PC-3 (cell line): ENCODE measurements at regions of chr6 and their contacts with region 1.

Region 1: DNA sequence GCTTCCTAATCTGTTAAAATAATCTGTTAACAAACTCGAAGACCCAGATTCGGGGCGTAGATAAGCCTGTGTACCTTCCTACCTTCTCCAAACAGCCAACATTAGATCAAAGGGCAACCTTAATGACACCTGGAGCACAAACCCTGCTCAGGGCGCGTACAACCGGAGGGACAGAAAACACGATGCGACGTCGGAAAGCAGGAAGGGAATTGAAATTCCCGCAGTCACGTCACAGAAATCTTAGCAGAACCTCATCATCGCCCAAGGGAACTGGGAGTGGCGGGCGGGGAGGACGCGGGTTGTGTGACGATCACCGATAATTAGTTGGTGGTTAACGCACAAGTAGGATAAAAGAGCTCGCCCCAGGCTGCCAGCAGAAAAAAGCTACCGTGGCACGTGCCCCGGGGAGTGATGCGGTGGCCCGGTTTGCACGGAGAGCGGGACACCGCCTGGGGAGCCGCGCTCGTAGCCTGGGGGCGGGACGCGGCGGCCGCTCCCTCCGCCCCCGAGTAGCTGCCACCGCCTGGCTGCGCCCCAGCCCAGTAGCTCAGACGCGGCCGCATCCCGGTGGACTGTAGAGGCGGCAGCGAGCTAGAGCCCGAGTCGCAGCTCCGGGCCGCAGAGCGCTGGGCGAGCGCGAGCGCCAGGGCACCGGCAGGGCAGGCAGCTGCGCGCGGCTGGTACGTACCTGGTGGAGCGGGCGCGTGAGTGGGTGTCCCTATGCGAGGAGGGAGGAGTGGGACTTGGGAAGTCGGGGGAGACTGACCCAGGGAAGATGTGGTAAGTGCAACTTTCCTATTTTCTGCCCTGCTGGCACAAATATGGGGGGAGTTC is at the start of gene PKIB:
- DNase-seq: peak; percentile 82
- ATAC-seq: peak; percentile 93
- H3K4me3 ChIP-seq: peak within 1 kb of the TSS; percentile 94
- H3K27ac ChIP-seq: peak within 1 kb of the TSS; percentile 49
- H3K4me1 ChIP-seq: peaks cover 4% of the 10 kb centered on the region
- H3K27me3 ChIP-seq: no peaks in the 10 kb centered on the region
- CTCF ChIP-seq: peak; percentile 28; the same call in 1 of the 2 replicates
- total RNA-seq, gene PKIB: 22.4 and 28.0 TPM in 2 replicates

Region 2: DNA sequence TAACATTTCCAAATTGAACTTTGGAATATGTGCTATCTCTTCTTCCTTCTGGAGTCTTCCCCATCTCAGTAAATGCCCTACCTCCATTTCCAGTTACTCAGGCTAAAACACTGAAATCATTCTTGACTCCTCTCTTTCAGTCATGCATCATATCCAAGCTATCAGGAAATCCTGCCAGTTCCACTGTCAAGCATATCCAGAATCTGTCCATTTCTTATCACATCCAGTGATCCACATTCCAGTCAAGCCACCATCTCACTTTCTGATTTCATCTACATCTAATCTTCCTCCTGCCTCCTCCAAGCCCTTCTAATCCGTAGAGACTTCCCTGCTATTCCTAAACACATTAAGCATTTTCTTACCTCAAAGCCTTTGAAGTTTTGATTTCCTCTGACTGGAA is 1260.5 kb before region 1 on chr6:
- CTCF ChIA-PET with region 1: no interaction called
- POLR2A ChIA-PET with region 1: no interaction called
- intact Hi-C with region 1: no loop called
- DNase-seq: no peak
- ATAC-seq: no peak
- H3K4me3 ChIP-seq: no peak overlapping the region
- H3K27ac ChIP-seq: no peak overlapping the region
- H3K4me1 ChIP-seq: no peaks in the 10 kb centered on the region
- H3K27me3 ChIP-seq: no peaks in the 10 kb centered on the region
- CTCF ChIP-seq: no peak

Region 3: DNA sequence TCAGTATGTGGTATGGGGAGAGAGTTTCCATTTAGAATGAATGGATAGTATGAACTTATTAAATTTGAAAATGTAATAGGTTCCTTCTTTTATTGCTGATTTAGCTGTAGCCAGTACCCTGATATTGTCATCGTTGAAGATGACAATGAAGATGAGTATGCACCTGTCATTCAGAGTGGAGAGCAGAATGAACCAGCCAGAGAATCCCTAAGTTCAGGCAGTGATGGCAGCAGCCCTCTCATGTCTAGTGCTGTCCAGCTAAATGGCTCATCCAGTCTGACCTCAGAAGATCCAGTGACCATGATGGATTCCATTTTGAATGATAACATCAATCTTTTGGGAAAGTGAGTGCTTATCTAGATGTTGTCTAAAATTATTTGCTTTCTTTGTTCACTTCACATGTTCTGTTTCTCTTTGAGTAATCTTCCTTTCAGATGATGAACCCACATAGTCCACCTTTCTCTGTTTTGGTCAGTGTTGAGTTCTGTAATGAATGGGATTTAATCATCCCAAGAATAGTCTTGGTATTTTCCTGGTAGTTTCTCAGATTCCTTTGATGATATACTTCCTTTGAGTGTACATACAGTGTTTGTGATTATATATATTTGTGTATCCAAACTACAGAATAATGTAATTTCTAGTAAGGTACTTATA is 187.3 kb before region 1 on chr6:
- CTCF ChIA-PET with region 1: no interaction called
- POLR2A ChIA-PET with region 1: no interaction called
- intact Hi-C with region 1: no loop called
- DNase-seq: no peak
- ATAC-seq: no peak
- H3K4me3 ChIP-seq: no peak overlapping the region
- H3K27ac ChIP-seq: no peak overlapping the region
- H3K4me1 ChIP-seq: no peaks in the 10 kb centered on the region
- H3K27me3 ChIP-seq: no peaks in the 10 kb centered on the region
- CTCF ChIP-seq: no peak

Region 4: GRCh38 chr6:122491919-122492555 is 118.0 kb before region 1 on chr6:
- CTCF ChIA-PET with region 1: interaction called, 3 read pairs
- POLR2A ChIA-PET with region 1: no interaction called
- intact Hi-C with region 1: loop called (anchors 1 kb)
- DNase-seq: peak; percentile 80
- ATAC-seq: peak; percentile 98
- H3K4me3 ChIP-seq: no peak overlapping the region
- H3K27ac ChIP-seq: no peak overlapping the region
- H3K4me1 ChIP-seq: peaks cover 15% of the 10 kb centered on the region
- H3K27me3 ChIP-seq: no peaks in the 10 kb centered on the region
- CTCF ChIP-seq: peak; percentile 93

Region 5: DNA sequence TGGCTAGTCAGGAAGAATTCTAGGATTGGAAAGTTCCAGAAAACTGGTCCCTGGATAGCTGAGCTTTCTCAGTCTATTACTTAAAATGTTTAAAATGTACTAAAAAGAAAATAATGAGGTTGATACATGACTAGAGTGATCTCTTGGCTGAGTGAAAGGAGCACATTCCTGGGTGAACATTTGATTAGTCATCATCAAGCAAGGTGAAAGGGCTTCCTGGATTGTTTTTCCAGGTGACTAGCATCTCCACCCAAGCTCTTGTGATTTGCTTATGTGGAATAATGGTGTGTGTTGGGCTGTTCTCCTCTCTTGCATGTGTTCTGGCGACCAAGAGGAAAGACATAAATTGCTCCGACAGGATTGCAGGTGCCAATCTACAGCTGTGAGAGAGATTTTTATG is 43.0 kb after region 1 on chr6:
- CTCF ChIA-PET with region 1: interaction called, 4 read pairs
- POLR2A ChIA-PET with region 1: no interaction called
- intact Hi-C with region 1: loop called (anchors 2 kb)
- DNase-seq: peak; percentile 81
- ATAC-seq: peak; percentile 62
- H3K4me3 ChIP-seq: peak overlapping the region; percentile 59
- H3K27ac ChIP-seq: peak overlapping the region; percentile 99
- H3K4me1 ChIP-seq: peaks cover 69% of the 10 kb centered on the region
- H3K27me3 ChIP-seq: no peaks in the 10 kb centered on the region
- CTCF ChIP-seq: no peak

Region 6: GRCh38 chr6:122677406-122677805 is 67.3 kb after region 1 on chr6:
- CTCF ChIA-PET with region 1: interaction called, 3 read pairs
- POLR2A ChIA-PET with region 1: interaction called, 4 read pairs
- intact Hi-C with region 1: loop called (anchors 2 kb)
- DNase-seq: no peak
- ATAC-seq: no peak
- H3K4me3 ChIP-seq: no peak overlapping the region
- H3K27ac ChIP-seq: peak overlapping the region; percentile 50
- H3K4me1 ChIP-seq: peaks cover 13% of the 10 kb centered on the region
- H3K27me3 ChIP-seq: no peaks in the 10 kb centered on the region
- CTCF ChIP-seq: no peak

Region 7: GRCh38 chr6:122709922-122710512 is 99.9 kb after region 1 on chr6:
- CTCF ChIA-PET with region 1: no interaction called
- POLR2A ChIA-PET with region 1: no interaction called
- intact Hi-C with region 1: loop called (anchors 5 kb)
- DNase-seq: no peak
- ATAC-seq: no peak
- H3K4me3 ChIP-seq: no peak overlapping the region
- H3K27ac ChIP-seq: no peak overlapping the region
- H3K4me1 ChIP-seq: peaks cover 19% of the 10 kb centered on the region
- H3K27me3 ChIP-seq: no peaks in the 10 kb centered on the region
- CTCF ChIP-seq: no peak

Region 8: DNA sequence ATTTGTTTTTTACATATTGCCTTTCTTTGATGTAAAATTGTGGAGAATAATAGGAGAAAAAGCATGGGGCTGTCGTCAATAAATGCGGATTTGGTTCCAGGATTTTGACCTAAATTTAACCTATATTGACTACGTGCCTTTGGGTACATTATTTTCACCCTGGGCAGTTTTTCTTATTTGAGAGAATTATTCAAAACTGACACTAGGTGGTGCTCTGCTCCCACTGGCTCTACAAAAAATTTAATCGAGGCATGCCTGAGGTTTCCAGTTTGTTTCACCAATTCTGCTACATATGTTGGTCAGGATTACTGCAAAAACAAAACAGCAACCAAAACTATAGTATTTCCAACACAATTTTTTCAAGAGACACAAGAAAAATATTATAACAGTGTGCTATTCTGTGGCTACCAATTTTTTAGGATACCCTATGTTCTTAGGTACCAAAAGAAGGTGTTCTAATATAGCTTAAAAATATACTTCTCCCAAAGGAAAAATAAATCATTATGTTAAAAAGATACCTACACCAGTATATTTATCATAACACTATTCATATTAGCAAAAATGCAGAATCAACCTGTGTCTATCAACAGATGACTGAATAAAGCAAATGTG is 120.8 kb after region 1 on chr6:
- CTCF ChIA-PET with region 1: interaction called, 5 read pairs
- POLR2A ChIA-PET with region 1: no interaction called
- intact Hi-C with region 1: loop called (anchors 2 kb)
- DNase-seq: peak; percentile 44
- ATAC-seq: no peak
- H3K4me3 ChIP-seq: no peak overlapping the region
- H3K27ac ChIP-seq: no peak overlapping the region
- H3K4me1 ChIP-seq: 0 out of 2 replicates have a peak, but pooled peaks cover 5% of the 10 kb centered on the region
- H3K27me3 ChIP-seq: no peaks in the 10 kb centered on the region
- CTCF ChIP-seq: peak; percentile 74